GM12878 (cell line): ENCODE measurements at regions of chr3 and their contacts with region 1.

Region 1: DNA sequence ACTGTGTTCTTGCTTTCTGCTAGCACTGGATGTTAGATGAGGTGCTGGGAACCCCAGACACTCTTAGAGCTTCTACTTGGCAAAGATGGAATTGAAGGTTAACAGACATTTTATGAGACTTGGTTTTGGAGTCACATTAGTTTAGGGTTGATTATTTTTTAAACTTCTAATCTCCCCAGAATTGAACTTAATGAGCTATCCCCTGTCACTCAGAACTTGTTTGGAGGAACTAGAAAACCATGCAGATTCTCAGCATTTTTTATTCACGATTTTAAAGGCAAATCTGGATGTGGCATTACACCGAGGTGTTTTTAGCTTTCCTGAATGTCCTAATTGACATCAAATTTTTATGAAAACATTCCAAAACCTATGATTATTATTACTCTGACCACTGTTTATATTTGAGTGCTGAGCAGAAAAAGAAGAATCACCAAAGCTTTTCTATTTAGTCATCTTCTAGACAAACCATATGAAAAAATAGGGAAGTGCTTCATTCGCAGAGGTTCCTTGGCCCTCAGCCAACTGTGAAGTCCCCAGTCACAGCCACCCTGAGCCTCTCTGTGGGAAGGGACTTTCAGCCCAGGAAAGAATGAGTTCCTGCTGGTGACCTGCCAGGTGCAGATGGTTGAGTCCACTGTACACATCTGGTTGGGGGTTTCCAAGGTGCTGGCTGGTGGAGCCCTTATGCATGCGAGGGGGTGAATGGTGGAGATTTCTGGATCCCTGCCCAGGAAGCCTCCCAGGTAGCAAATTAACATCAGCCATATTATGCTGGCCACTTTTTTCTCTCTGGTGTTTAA is 196.0 kb upstream of the TOPAZ1 start:
- DNase-seq: peak; percentile 98
- ATAC-seq: peak; percentile 93
- H3K4me3 ChIP-seq: no peak overlapping the region
- H3K27ac ChIP-seq: peak overlapping the region; percentile 93
- H3K4me1 ChIP-seq: peaks cover 72% of the 10 kb centered on the region
- H3K27me3 ChIP-seq: no peaks in the 10 kb centered on the region
- CTCF ChIP-seq: no peak
- EP300 ChIP-seq: peak; percentile 81 to 90; a peak in 3 of 4 replicates
- POLR2A ChIP-seq: no peak
- RAD21 ChIP-seq: no peak

Region 2: DNA sequence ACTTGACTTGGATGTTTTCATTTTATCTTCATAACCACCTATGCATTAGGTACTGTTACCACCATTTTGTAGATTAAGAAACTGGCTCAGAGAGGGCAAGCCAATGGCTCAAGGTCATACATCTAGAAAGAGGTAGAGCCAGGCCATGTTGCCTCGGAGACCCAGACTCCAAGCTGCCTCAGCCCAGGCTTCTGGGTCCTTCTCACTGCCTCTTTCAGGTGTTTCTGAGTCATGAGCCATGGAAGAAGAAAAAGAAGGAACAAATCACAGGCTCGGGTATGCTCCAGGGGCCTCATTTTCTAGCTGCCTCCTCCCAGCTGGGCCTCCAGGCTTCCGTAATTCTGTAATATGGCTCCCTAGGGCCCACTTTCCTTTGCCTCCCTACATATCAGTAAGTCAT is 30.5 kb before region 1 on chr3:
- CTCF ChIA-PET with region 1: no interaction called
- POLR2A ChIA-PET with region 1: no interaction called
- RAD21 ChIA-PET with region 1: no interaction called
- SMC1A ChIA-PET with region 1: no interaction called
- in situ Hi-C with region 1: no loop called
- intact Hi-C with region 1: no loop called
- DNase-seq: no peak
- ATAC-seq: no peak
- H3K4me3 ChIP-seq: no peak overlapping the region
- H3K27ac ChIP-seq: no peak overlapping the region
- H3K4me1 ChIP-seq: no peaks in the 10 kb centered on the region; the same call in 1 of the 2 replicates
- H3K27me3 ChIP-seq: no peaks in the 10 kb centered on the region
- CTCF ChIP-seq: no peak
- EP300 ChIP-seq: no peak
- POLR2A ChIP-seq: no peak
- RAD21 ChIP-seq: no peak

Region 3: DNA sequence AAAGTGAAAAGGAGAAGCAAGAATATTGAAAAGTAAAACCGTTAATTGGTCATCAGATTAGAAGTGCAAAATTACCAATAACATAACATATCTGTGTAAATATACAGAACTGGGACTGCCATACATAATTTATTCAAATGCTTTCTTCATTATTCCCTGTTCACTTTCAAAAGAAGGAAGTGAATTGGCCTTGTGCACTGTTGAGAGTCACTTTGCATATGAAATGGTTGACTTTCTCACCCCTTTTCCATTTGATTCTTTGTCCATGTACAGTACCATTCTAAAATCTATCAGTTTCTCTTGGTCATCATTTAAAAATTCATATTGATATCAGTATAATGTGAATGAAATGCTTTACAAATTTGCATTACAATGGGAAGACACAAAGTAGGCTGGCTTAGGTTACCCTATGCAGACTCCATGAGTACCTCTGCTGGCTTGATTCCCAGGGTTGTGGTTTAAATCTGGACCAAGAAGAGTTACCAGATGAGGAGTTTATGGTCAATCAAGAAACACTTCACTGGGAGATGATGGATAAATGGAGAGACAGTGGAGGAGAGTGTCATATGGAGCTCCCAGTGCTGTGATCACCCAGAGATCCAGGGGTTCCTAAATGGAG is 14.9 kb before region 1 on chr3:
- CTCF ChIA-PET with region 1: interaction called, 13 read pairs
- POLR2A ChIA-PET with region 1: interaction called, 44 read pairs
- RAD21 ChIA-PET with region 1: interaction called, 28 read pairs
- SMC1A ChIA-PET with region 1: interaction called, 89 read pairs
- in situ Hi-C with region 1: no loop called
- intact Hi-C with region 1: no loop called
- DNase-seq: no peak
- ATAC-seq: no peak
- H3K4me3 ChIP-seq: peak overlapping the region; percentile 45; the same call in 1 of the 2 replicates
- H3K27ac ChIP-seq: peak overlapping the region; percentile 90
- H3K4me1 ChIP-seq: peaks cover 34% of the 10 kb centered on the region
- H3K27me3 ChIP-seq: no peaks in the 10 kb centered on the region
- CTCF ChIP-seq: no peak
- EP300 ChIP-seq: no peak
- POLR2A ChIP-seq: no peak
- RAD21 ChIP-seq: no peak